ENCODE measurements at regions of chr19 and their contacts with region 1.

Region 1: GRCh38 chr19:12974301-12975220 is 5.2 kb downstream of the DAND5 start:
- DNase-seq: peak; percentile 76
- CTCF ChIP-seq: no peak

Region 2: GRCh38 chr19:12838182-12838885 is 136.2 kb before region 1 on chr19 and contains the start of gene MAST1:
- in situ Hi-C with region 1: no loop called
- DNase-seq: peak; percentile 93
- CTCF ChIP-seq: peak; percentile 82

Region 3: GRCh38 chr19:12856653-12857052 is 117.9 kb before region 1 on chr19:
- in situ Hi-C with region 1: no loop called
- DNase-seq: no peak
- CTCF ChIP-seq: no peak

Region 4: DNA sequence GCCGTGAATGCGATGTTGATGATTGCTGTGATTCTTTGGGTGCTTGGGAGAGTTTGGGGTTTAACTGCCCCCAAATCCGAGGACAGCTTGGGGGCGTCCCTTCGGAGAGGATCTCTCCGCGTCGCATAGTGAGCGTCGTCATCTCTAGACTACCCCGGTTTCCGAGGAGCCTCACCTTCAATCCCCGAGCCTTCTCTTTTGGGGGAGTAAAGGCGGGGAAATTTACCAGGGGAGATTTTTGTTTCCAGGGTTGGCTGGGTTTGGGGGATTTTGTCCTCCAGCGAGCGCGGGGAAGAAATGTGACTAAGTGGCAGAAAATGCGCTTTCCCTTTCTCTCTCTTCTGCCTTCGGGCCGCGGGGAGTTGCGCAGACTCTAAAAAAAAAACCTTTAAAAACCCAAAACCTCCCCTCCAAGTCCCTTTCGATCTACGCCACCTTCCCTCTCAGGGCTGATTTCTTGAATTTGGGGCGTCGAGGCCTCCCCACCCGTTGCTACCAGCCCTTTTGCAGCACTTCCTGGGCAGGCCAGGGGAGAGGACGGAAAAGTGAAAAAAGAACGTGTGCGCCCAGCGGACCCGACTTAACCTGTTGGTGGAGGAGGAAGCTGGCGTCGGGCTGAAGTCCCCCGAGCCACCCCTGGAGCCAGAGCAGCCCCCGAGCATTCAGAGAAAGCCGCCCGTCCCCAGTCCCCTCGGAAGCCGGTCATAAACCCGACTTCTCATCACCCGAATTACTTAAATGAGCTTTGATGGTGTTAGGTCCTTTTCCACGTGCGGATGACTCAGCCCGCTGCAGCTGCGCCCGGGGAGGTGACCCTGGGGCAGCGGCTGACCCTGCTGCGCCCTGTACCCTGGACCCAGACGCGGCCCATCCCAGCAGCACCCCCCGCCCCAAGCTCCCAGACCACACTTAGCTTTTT is 38.4 kb after region 1 on chr19:
- in situ Hi-C with region 1: no loop called
- DNase-seq: peak; percentile 86
- CTCF ChIP-seq: no peak

Region 5: GRCh38 chr19:13093407-13094105 is 119.0 kb after region 1 on chr19:
- in situ Hi-C with region 1: loop called (anchors 5 kb)
- DNase-seq: peak; percentile 96
- CTCF ChIP-seq: peak; percentile 93

Measured in GM13977 (cell line).